ENCODE measurements at regions of chr19 and their contacts with region 1.

Region 1: DNA sequence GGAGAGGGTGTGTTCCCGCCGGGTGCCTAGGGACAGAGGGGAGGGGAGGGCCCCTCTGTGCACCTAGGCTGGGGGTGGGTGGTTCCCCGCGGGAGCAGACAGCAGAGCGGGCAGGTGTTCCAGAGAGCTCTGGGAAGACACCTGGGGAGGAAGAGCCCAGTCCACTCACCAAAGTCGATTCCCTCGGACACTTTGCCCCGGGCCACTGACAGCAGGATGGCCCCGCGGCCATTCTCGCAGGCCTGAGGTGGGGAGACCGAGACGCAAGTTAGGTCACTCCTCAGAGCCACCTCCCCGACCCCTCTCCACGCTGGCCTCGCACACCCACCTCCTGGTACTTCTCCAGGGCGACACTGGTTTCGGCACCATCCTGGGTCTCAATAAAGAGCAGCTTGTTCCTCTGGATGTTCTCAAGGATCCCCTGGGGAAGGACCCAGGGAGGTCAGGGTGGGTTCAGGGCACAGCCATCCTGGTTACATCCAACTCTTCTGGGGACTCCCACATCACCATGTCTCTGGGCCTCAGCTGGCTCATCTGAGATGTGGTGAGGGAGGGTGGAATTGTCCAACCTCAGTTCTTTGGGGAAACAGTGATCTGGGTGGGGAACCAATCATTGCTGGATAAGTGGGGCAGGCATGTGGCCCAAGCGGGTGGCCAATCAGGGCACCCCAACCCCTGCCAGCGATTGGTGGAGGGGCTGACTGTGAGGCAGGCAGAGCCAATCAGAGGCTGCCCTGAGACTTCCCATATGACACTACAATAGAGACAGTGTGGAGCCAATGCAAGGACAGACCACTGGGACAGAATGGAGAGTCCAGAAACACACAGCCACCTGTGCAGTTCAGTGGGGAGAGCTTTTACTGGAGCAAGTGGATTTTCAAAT is 12.6 kb downstream of the KLC3 start:
- DNase-seq: no peak
- H3K4me3 ChIP-seq: no peak overlapping the region
- H3K27me3 ChIP-seq: no peaks in the 10 kb centered on the region
- CTCF ChIP-seq: no peak

Region 2: DNA sequence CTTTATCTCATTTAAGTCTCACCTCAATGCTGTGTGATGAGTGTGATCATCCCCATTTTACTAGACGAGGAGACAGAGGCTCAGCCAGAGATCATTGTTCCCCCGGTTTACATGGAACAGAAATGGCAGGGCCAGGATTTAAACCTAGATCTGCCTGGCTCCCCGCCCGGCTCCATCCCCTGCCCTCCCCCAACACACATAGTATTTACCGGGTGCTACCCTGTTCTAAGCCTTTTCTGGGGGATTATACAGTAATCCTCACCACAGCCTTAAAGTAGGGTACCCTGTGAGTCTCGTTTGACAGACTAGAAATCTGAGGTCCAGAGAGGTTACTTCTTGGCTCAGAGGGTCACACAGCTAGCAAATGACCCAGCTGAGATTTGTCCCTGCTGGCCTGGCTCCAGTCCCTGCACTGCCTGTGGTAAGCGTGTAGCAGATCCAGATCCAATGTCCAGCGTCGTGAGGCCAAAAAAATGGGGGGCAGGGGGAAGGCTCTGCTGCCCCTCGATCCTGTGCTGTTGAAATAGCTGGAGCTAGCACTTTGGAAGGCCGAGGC is 16.4 kb before region 1 on chr19:
- CTCF ChIA-PET with region 1: interaction called, 31 read pairs
- POLR2A ChIA-PET with region 1: no interaction called
- DNase-seq: no peak
- H3K4me3 ChIP-seq: no peak overlapping the region
- H3K27me3 ChIP-seq: peaks cover 6% of the 10 kb centered on the region; the same call in 1 of the 2 replicates
- CTCF ChIP-seq: no peak

Region 3: DNA sequence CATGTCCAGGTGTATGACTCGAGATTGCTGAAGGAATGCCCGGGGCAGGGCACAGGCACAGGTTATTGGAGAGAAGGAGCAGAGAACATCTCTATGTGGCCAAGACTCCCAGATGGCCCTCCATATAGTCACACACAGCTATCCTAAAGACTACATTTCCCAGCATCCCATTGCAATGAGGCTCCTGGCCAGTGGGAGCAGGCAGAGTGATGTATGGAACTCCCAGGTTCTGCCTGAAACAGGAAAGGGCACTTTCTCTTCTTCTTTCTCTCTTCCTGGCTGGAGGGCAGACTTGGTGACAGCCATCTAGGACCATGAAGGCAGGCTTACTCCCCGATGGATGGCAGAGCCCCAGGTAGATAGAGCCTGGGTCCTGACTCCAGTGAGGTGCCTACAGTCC is 38.2 kb after region 1 on chr19:
- CTCF ChIA-PET with region 1: no interaction called
- POLR2A ChIA-PET with region 1: no interaction called
- DNase-seq: no peak
- H3K4me3 ChIP-seq: no peak overlapping the region
- H3K27me3 ChIP-seq: no peaks in the 10 kb centered on the region
- CTCF ChIP-seq: no peak

Measured in BJ (cell line).